ENCODE measurements at regions of chr22 and their contacts with region 1.

Region 1: DNA sequence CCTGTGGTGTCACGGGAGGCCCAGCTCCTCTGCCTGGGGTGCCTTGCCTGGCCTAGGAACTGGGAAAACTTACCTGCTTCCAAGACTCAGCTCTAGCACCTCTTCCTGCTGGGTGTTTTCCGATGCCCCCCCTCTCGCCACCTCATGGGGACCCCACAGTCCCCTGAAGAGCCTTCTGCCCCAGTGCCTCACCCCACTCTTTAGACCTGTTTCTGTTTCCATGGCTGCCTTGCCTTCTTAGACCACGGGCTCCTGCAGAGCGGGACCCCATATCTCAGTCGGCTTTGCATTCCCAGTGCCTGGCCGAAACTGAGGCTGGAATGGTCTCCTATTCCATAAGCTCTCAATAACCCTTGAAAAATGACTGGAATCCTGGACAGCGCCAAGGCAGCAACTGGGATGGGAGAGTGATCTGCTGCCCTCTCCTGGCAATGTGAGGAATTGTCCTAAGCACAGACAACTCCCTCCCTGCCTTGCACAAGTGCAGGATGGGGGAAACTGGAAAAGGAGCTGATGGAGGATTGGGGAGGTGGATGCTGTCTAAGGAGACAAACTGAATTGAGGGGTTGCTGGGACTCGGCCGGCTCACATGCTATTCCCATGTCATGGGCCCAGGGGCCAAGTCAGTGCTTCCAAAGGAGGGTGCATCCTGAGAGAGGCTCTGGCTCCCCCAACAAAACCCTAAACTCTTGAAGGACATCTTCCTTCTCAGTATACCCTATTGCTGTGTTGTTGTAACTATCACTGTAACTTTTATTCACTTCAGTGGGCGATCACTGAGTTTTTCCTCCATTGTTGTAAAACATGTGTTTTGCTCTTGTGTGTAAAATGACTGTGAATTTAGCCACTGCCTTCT is 26.6 kb upstream of the IL17RA start:
- DNase-seq: peak; percentile 52
- H3K4me3 ChIP-seq: no peak overlapping the region
- H3K27ac ChIP-seq: no peak overlapping the region
- H3K4me1 ChIP-seq: no peaks in the 10 kb centered on the region
- H3K27me3 ChIP-seq: no peaks in the 10 kb centered on the region
- CTCF ChIP-seq: peak; percentile 97

Region 2: GRCh38 chr22:16917144-16918003 is 140.8 kb before region 1 on chr22:
- CTCF ChIA-PET with region 1: interaction called, 9 read pairs
- dilution Hi-C with region 1: no loop called
- in situ Hi-C with region 1: loop called (anchors 5 kb)
- intact Hi-C with region 1: loop called (anchors 1 kb)
- DNase-seq: peak; percentile 31
- H3K4me3 ChIP-seq: no peak overlapping the region
- H3K27ac ChIP-seq: no peak overlapping the region
- H3K4me1 ChIP-seq: no peaks in the 10 kb centered on the region
- H3K27me3 ChIP-seq: no peaks in the 10 kb centered on the region
- CTCF ChIP-seq: peak; percentile 55 to 70

Region 3: DNA sequence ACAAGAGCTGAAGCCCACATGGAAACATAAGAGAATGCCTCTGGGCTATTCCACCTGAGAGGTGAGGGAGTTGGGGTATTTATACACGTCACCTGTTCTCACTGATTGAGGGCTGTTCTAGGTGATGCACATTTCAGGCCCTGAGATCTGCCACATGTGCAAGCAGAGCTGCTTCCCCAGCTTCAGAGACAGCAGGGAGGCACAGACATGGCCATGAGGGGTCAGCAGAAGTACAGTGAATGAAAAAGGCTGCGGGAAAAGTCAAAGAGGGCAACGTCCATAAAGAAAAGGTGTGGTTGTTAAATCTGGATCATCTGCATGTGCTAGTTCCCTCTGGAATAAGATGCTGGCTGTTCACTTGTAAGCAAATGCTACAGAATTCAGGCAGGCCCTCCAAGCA is 125.6 kb before region 1 on chr22:
- CTCF ChIA-PET with region 1: no interaction called
- dilution Hi-C with region 1: no loop called
- in situ Hi-C with region 1: no loop called
- intact Hi-C with region 1: loop called (anchors 1 kb)
- DNase-seq: peak; percentile 22
- H3K4me3 ChIP-seq: no peak overlapping the region
- H3K27ac ChIP-seq: no peak overlapping the region
- H3K4me1 ChIP-seq: no peaks in the 10 kb centered on the region
- H3K27me3 ChIP-seq: no peaks in the 10 kb centered on the region
- CTCF ChIP-seq: peak; percentile 39 to 51

Region 4: DNA sequence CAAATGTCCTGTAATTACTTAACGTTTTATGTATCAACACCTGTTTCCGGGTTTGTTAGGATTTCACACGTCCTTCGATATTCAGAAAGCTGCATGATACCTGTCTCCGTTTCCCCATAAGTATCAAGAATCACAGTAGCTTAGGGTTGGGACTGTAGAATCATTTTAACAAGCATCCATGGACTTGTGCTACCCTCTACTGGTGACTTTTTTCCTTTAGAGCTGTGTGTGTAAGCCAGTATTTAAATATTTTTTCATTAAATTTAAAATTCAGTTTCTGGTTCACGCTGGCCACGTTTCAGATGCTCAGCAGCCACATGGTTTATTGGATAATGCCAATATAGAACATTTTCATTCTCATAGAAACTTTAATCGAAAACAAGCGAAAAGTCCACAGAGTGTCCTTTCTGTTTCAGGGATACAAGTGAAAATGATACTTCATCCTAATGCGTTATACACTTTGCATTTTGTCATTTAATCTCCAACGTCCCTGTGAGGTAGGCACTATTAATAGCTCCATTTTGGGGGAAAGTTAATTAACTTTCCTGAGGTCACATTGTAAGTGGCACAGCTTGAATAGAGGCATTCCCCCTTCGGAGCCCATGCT is 443.6 kb after region 1 on chr22:
- CTCF ChIA-PET with region 1: interaction called, 3 read pairs
- dilution Hi-C with region 1: no loop called
- in situ Hi-C with region 1: no loop called
- intact Hi-C with region 1: loop called (anchors 1 kb)
- DNase-seq: peak; percentile 53
- H3K4me3 ChIP-seq: no peak overlapping the region
- H3K27ac ChIP-seq: no peak overlapping the region
- H3K4me1 ChIP-seq: no peaks in the 10 kb centered on the region
- H3K27me3 ChIP-seq: peaks cover 2% of the 10 kb centered on the region
- CTCF ChIP-seq: peak; percentile 49 to 67

Measured in mammary epithelial cell (primary cell).